K562 (cell line): ENCODE measurements at regions of chr11 and their contacts with region 1.

Region 1: DNA sequence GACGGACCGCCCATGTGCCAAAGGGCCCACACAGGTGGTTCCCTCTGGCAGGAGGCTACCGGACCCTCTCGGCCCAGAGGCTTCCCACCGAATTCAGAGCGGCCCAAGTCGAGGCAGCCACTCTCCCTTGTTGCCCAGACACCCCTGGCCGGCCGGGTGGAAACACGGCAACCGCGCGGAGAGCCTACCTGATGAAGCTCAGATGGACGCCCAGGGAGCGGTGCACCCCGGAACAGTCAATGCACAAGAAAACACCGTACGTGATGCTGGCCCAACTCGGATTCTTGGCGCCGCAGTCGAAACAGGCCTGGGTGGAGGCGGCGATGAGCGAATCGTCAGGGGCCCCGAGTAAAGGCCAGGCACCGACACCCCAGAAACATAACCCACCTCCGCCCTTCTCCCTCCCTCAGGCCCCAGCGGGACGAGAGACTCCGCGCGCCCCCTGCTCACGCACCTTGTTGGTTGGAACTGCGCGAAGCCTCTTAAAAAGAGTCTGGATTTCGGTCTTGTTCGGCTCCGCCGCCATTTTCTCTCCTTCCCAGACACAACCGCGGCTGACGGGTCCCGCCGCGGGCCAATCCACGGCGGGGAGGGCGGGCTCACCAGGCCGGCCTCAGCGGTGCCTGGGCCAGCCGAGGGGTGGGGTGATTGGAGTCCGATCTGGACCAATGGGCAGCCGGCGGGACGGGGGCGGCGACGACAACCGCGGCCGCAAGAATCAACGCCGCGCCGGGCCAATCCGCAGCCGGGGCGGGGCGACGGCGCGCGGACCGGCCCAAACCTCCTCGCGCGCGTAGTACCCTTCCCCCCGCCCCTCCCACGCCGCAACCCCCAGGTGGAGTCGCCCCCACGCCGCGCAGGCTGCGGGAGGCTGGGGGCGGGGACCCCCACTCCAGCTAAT is at the start of gene ARFGAP2:
- DNase-seq: peak; percentile 97 to 100 (median 98)
- ATAC-seq: peak; percentile 97
- H3K4me3 ChIP-seq: peak within 1 kb of the TSS; percentile 89
- H3K27ac ChIP-seq: peak within 1 kb of the TSS; percentile 97
- H3K4me1 ChIP-seq: peaks cover 16 to 32% of the 10 kb centered on the region in 2 experiments
- H3K27me3 ChIP-seq: no peaks in the 10 kb centered on the region
- CTCF ChIP-seq: no peak; a peak in 1 of 6 replicates
- EP300 ChIP-seq: no peak
- POLR2A ChIP-seq: peak; percentile 84
- RAD21 ChIP-seq: no peak
- polyA plus RNA-seq, gene ARFGAP2: 29.1 to 42.1 TPM

Region 2: DNA sequence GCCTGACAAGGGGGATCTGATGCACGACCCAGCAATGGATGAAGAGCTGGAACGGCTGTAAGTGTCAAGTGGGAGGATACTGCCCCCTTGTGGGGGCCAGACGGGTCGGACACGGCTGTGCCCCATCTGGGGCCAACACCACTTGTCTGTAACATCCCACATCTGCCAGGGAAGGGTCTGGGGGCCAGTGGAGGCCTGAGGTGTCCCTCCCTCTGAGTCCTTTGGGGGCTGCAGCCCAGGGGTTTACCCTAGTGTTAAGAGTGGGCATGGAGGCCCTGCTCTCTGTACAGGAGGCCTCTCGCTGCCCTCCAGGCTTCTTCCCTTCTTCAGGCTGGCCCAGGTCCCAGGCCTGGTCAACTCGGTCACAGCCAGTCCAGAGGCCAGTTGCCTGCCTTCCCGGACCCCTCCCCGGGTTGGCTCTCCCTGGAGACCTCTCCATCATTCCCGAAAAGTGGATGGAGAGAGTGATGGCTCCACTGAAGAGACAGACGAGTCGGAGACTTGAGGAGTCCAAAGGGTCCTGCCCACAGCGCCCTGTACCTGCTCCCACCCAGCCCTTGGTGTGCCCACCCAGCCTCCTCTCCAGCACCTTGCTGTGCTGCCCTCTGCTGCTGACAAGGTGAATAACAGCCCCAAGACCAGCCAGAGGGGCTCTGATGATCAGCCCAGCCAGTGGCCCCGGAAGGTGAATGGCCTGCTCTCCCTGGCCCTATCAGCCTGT is 15.3 kb before region 1 on chr11:
- CTCF ChIA-PET with region 1: no interaction called
- POLR2A ChIA-PET with region 1: interaction called, 29 read pairs
- in situ Hi-C with region 1: no loop called
- intact Hi-C with region 1: no loop called
- DNase-seq: peak; percentile 82 to 87 (median 84)
- ATAC-seq: peak; percentile 90
- H3K4me3 ChIP-seq: no peak overlapping the region
- H3K27ac ChIP-seq: no peak overlapping the region
- H3K4me1 ChIP-seq: peaks cover 0 to 21% of the 10 kb centered on the region in 2 experiments; a peak in 2 of 5 replicates
- H3K27me3 ChIP-seq: no peaks in the 10 kb centered on the region
- CTCF ChIP-seq: peak; percentile 81 to 86 (median 83)
- EP300 ChIP-seq: no peak
- POLR2A ChIP-seq: no peak
- RAD21 ChIP-seq: peak; percentile 57 to 80

Region 3: DNA sequence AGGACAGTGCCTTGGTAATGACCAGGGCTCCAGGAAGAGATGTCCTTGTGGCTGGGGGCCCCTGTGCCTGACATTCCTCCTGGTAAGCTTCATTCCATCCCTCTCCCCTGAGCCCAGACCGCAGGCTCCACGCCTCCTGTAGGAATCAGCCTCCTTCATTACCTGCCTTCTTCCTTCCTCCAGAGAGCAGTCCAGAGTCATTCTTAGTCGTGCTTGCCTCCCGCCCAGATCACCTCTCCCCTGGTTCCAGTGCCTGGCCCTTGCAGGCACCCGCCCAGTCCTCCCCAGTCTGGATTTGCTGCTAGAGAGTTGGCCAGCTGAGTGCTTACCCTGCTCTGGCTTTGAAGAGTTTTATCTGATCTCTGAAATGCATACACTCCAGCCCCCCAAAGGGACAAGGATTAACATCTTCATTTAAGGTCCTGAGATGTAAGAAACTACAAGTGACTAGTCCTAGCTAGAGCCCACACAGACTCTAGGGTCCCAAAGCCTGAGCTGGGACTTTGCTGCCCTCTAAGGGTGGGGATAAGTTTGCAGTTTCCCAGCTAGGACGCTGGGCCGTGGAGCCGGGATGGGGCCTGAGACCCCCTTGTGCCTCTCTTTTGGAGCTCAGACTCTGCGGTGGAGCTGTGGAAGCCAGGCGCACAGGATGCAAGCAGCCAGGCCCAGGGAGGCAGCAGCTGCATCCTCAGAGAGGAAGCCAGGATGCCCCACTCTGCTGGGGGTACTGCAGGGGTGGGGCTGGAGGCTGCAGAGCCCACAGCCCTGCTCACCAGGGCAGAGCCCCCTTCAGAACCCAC is 82.8 kb after region 1 on chr11:
- CTCF ChIA-PET with region 1: no interaction called
- POLR2A ChIA-PET with region 1: no interaction called
- in situ Hi-C with region 1: no loop called
- intact Hi-C with region 1: loop called (anchors 2 kb)
- DNase-seq: peak in 2 of 4 experiments; percentile 67 to 68
- ATAC-seq: peak; percentile 82
- H3K4me3 ChIP-seq: no peak overlapping the region
- H3K27ac ChIP-seq: no peak overlapping the region
- H3K4me1 ChIP-seq: peaks cover 45 to 46% of the 10 kb centered on the region in 2 experiments
- H3K27me3 ChIP-seq: no peaks in the 10 kb centered on the region
- CTCF ChIP-seq: peak; percentile 74 to 83 (median 81)
- EP300 ChIP-seq: no peak
- POLR2A ChIP-seq: no peak
- RAD21 ChIP-seq: peak; percentile 28 to 65; a peak in 3 of 4 replicates

Region 4: DNA sequence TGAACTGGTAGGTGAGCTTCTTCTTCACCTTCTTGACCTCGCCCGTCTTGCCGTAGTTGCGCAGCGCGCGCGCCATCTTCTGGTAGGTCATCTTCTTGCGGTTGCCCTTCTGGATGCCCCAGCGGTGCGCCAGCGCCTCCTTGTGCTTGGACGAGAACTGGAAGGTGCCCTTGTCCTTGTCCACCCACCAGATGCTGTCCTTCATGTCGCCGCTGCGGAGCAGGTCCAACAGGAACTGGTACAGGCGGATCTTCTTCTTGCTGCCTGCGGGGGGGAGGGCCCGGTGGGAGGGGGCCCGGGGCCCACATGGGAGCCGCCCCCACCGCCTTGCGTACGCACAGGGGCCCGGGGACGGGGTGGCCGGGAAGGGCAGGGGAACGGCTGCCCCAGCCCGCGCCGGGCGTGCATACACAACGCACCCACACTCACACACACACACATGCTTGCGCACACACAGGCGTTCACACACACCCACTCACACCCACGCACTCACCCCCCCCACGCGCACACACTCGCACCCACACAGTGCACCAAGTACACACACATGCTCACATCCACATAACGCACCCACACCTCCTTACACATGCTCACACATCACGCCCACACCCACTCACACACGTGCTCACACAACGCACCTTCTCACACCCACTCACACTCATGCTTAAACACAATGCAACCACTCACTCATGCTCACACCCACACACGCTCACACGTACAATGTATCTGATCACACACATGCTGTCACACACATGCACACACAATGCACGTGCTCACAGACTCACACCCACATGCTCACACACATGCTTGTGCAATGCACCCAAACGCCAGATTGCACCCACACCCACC is 178.9 kb after region 1 on chr11:
- CTCF ChIA-PET with region 1: interaction called, 10 read pairs
- POLR2A ChIA-PET with region 1: no interaction called
- in situ Hi-C with region 1: no loop called
- intact Hi-C with region 1: loop called (anchors 1 kb)
- DNase-seq: peak; percentile 78 to 96 (median 82)
- ATAC-seq: peak; percentile 96
- H3K4me3 ChIP-seq: no peak overlapping the region
- H3K27ac ChIP-seq: no peak overlapping the region; the same call in 2 of the 3 replicates
- H3K4me1 ChIP-seq: peaks cover 0 to 48% of the 10 kb centered on the region in 2 experiments; a peak in 3 of 5 replicates
- H3K27me3 ChIP-seq: no peaks in the 10 kb centered on the region
- CTCF ChIP-seq: peak; percentile 99 to 100 (median 100)
- EP300 ChIP-seq: no peak
- POLR2A ChIP-seq: no peak
- RAD21 ChIP-seq: peak; percentile 91 to 97

Region 5: GRCh38 chr11:47399860-47400767 is 223.5 kb after region 1 on chr11:
- CTCF ChIA-PET with region 1: no interaction called
- POLR2A ChIA-PET with region 1: no interaction called
- in situ Hi-C with region 1: no loop called
- intact Hi-C with region 1: no loop called
- DNase-seq: peak; percentile 65 to 96 (median 92)
- ATAC-seq: peak; percentile 86
- H3K4me3 ChIP-seq: peak overlapping the region; percentile 43
- H3K27ac ChIP-seq: peak overlapping the region; percentile 81
- H3K4me1 ChIP-seq: peaks cover 29 to 44% of the 10 kb centered on the region in 2 experiments
- H3K27me3 ChIP-seq: no peaks in the 10 kb centered on the region
- CTCF ChIP-seq: no peak
- EP300 ChIP-seq: peak; percentile 34; the same call in 1 of the 2 replicates
- POLR2A ChIP-seq: 0 out of 2 replicates have a peak, but pooled peaks have one; percentile 38
- RAD21 ChIP-seq: no peak

Region 6: DNA sequence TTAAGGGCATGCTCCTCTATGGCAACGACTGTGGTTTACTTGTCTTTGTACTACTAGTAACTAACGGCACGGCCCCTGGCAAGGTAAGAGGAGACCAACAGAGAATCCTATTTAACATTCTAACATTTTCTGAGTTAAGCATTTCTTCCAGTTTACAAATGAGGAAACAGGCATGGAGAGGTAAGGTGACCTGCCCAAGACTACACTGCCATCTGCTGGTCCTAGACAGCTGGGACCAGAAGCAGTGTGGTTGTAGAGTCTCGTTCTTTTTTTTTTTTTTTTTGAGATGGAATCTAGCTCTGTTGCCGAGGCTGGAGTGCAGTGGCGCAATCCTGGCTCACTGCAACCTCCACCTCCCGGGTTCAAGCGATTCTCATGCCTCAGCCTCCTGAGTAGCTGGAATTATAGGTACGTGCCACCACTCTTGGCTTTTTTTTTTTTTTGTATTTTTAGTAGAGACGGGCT is 277.6 kb after region 1 on chr11:
- CTCF ChIA-PET with region 1: no interaction called
- POLR2A ChIA-PET with region 1: no interaction called
- in situ Hi-C with region 1: no loop called
- intact Hi-C with region 1: loop called (anchors 1 kb)
- DNase-seq: peak; percentile 61 to 87 (median 74)
- ATAC-seq: peak; percentile 98
- H3K4me3 ChIP-seq: no peak overlapping the region
- H3K27ac ChIP-seq: no peak overlapping the region
- H3K4me1 ChIP-seq: peaks cover 0 to 2% of the 10 kb centered on the region in 2 experiments; a peak in 1 of 5 replicates
- H3K27me3 ChIP-seq: no peaks in the 10 kb centered on the region; a peak in 1 of 5 replicates
- CTCF ChIP-seq: peak; percentile 84 to 95 (median 87)
- EP300 ChIP-seq: 0 out of 2 replicates have a peak, but pooled peaks have one; percentile 6
- POLR2A ChIP-seq: no peak
- RAD21 ChIP-seq: peak; percentile 66 to 76

Region 7: GRCh38 chr11:47924184-47924691 is 747.7 kb after region 1 on chr11:
- CTCF ChIA-PET with region 1: no interaction called
- POLR2A ChIA-PET with region 1: no interaction called
- in situ Hi-C with region 1: no loop called
- intact Hi-C with region 1: no loop called
- DNase-seq: no peak
- ATAC-seq: peak; percentile 59
- H3K4me3 ChIP-seq: no peak overlapping the region
- H3K27ac ChIP-seq: no peak overlapping the region
- H3K4me1 ChIP-seq: peaks cover 0 to 4% of the 10 kb centered on the region in 2 experiments; a peak in 3 of 5 replicates
- H3K27me3 ChIP-seq: no peaks in the 10 kb centered on the region
- CTCF ChIP-seq: no peak
- EP300 ChIP-seq: no peak
- POLR2A ChIP-seq: no peak
- RAD21 ChIP-seq: no peak